WTC11 (cell line): ENCODE measurements at regions of chr7 and their contacts with region 1.

Region 1: DNA sequence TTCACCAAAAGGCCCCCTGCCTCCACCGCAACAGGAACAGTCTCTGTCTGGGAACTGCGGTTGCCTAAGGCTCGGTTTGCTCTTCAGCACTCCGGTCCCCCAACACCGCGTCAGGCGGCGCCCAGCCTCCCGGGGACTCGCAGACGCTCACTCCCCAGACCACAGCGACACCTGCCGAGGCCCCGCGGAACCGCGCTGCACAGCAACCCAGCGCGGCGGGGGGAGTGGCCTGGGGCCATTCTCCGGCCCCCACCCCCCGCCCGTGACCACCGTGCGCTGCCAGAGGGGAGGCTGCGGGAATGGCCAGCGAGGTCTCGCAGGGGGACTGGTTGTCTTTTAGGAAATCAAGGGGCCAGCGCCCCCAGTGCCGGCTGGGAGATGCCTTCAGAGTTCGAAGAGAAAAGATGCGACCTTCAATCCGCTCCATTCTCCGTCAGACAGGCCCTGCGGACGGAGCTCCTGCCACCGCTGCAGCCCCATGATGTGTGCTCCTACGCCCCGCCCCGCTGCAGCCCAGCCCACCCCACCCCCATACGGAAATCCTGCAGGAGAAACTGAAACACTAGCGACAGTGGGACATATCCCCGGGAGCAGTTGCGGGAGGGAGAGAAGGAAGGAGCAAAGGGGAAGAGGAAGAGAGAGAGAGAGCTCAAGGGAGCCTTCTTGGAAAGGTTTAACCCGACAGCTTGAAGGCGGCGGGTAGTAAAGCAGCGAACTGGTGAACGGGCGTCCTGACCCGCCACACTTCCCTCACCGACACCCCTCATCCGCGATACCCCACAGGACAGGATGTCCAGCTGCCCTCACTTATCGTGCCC is 137.4 kb upstream of the CDCA7L start:
- DNase-seq: peak; percentile 96
- ATAC-seq: peak; percentile 94
- H3K4me3 Mint-ChIP-seq: peak overlapping the region; percentile 77
- H3K27ac Mint-ChIP-seq: peak overlapping the region; percentile 76
- H3K4me1 Mint-ChIP-seq: peaks cover 24% of the 10 kb centered on the region
- H3K27me3 Mint-ChIP-seq: peaks cover 19% of the 10 kb centered on the region
- CTCF ChIP-seq: peak; percentile 87; the same call in 1 of the 2 replicates

Region 2: GRCh38 chr7:21945454-21946227 is 137.5 kb before region 1 on chr7 and contains the start of gene CDCA7L:
- CTCF ChIA-PET with region 1: interaction called, 16 read pairs
- POLR2A ChIA-PET with region 1: interaction called, 5 read pairs
- DNase-seq: peak; percentile 84
- ATAC-seq: peak; percentile 79
- H3K4me3 Mint-ChIP-seq: peak within 1 kb of the TSS; percentile 84
- H3K27ac Mint-ChIP-seq: peak within 1 kb of the TSS; percentile 94
- H3K4me1 Mint-ChIP-seq: peaks cover 52% of the 10 kb centered on the region
- H3K27me3 Mint-ChIP-seq: no peaks in the 10 kb centered on the region
- CTCF ChIP-seq: no peak
- total RNA-seq, gene CDCA7L: 132 to 161 TPM (median 135 TPM) in 3 replicates

Region 3: GRCh38 chr7:22005151-22005550 is 77.9 kb before region 1 on chr7:
- CTCF ChIA-PET with region 1: interaction called, 10 read pairs
- POLR2A ChIA-PET with region 1: no interaction called
- DNase-seq: no peak
- ATAC-seq: no peak
- H3K4me3 Mint-ChIP-seq: no peak overlapping the region
- H3K27ac Mint-ChIP-seq: no peak overlapping the region
- H3K4me1 Mint-ChIP-seq: peaks cover 26% of the 10 kb centered on the region
- H3K27me3 Mint-ChIP-seq: no peaks in the 10 kb centered on the region
- CTCF ChIP-seq: no peak

Region 4: GRCh38 chr7:22051886-22052673 is 31.0 kb before region 1 on chr7:
- CTCF ChIA-PET with region 1: interaction called, 21 read pairs
- POLR2A ChIA-PET with region 1: no interaction called
- DNase-seq: no peak
- ATAC-seq: peak; percentile 81
- H3K4me3 Mint-ChIP-seq: no peak overlapping the region
- H3K27ac Mint-ChIP-seq: no peak overlapping the region; the same call in 1 of the 2 replicates
- H3K4me1 Mint-ChIP-seq: peaks cover 33% of the 10 kb centered on the region
- H3K27me3 Mint-ChIP-seq: no peaks in the 10 kb centered on the region
- CTCF ChIP-seq: no peak

Region 5: GRCh38 chr7:22066484-22066883 is 16.6 kb before region 1 on chr7:
- CTCF ChIA-PET with region 1: interaction called, 14 read pairs
- POLR2A ChIA-PET with region 1: no interaction called
- DNase-seq: no peak
- ATAC-seq: peak; percentile 72
- H3K4me3 Mint-ChIP-seq: no peak overlapping the region
- H3K27ac Mint-ChIP-seq: no peak overlapping the region
- H3K4me1 Mint-ChIP-seq: peaks cover 22% of the 10 kb centered on the region
- H3K27me3 Mint-ChIP-seq: no peaks in the 10 kb centered on the region; the same call in 1 of the 2 replicates
- CTCF ChIP-seq: no peak

Region 6: DNA sequence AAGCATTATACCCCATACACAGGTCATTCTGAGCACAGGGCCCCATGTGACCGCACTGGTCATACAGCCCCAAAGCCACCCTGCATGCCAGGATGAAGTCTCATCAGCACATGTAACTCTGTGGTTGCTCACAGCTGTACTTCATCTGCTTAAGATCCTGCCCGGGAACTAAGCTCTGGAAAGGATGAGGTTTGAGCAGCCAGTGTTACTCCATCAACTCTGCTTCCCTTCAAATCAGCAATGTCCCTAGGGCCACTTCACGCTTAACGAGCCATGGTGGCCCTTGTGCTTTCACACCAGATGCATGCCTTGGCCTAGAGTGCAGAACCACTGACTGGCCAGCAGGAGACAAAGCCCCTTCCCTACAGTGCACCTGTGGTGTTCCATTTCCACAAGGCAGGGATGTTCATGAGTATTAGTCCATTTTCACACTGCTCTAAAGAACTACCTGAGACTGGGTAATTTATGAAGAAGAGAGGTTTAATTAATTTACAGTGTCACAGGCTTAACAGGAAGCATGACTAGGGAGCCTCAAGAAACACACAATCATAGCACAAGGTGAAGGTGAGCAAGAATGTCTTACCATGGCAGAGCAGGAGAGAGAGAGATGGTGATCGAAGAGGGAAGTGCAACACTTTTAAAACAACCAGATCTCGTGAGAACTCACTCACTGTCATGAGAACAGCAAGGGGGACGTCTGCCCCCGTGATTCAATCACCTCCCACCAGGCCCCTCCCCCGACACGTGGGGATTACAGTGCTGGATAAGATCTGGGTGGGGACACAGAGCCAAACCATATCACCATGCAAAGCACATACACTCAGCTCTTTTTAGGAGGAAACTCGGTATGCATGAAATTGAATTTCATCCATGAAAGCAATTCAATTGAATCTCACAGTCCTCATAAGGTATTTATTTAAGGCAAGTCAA is 11.6 kb after region 1 on chr7:
- CTCF ChIA-PET with region 1: interaction called, 23 read pairs
- POLR2A ChIA-PET with region 1: no interaction called
- DNase-seq: no peak
- ATAC-seq: peak; percentile 76
- H3K4me3 Mint-ChIP-seq: no peak overlapping the region
- H3K27ac Mint-ChIP-seq: no peak overlapping the region
- H3K4me1 Mint-ChIP-seq: peaks cover 24% of the 10 kb centered on the region
- H3K27me3 Mint-ChIP-seq: no peaks in the 10 kb centered on the region
- CTCF ChIP-seq: no peak

Region 7: GRCh38 chr7:22202141-22202540 is 119.0 kb after region 1 on chr7:
- CTCF ChIA-PET with region 1: no interaction called
- POLR2A ChIA-PET with region 1: no interaction called
- DNase-seq: no peak
- ATAC-seq: no peak
- H3K4me3 Mint-ChIP-seq: no peak overlapping the region
- H3K27ac Mint-ChIP-seq: no peak overlapping the region
- H3K4me1 Mint-ChIP-seq: peaks cover 8% of the 10 kb centered on the region
- H3K27me3 Mint-ChIP-seq: peaks cover 20% of the 10 kb centered on the region
- CTCF ChIP-seq: no peak